ENCODE measurements at regions of chr15 and their contacts with region 1.

Region 1: GRCh38 chr15:48358229-48358641 is 27.0 kb downstream of the DUT start:
- DNase-seq: no peak
- ATAC-seq: peak in 1 of 4 donors; percentile 62
- H3K4me3 ChIP-seq: peak overlapping the region in 1 of 12 donors; percentile 3
- H3K27ac ChIP-seq: peak overlapping the region in 8 of 12 donors; percentile 3 to 53 (median 25)
- H3K4me1 ChIP-seq: peaks cover 0 to 20% (median 3%) of the 10 kb centered on the region in 12 donors
- H3K27me3 ChIP-seq: no peaks in the 10 kb centered on the region
- CTCF ChIP-seq: peak; percentile 38 to 75 (median 60)
- POLR2A ChIP-seq: no peak

Region 2: DNA sequence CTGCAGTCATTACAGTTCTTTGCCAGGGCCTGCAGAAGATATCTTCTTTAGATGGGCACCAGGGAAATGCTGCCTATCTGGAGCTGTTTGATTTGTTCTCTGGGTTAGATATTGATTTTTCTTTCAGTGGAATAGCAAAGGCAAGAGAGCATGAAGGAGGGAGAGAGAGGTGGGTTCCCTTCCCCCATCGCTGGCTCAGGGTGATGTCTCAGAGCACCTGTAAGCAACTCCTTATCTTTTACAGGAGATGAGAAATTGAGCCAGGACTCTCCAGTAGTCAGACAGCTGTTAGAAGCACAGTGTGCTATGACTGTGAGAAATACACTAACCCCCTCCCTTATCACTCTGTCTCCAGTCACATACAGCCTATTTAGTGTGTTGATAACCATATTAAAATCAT is 326.8 kb before region 1 on chr15:
- intact Hi-C with region 1: no loop called
- DNase-seq: no peak
- ATAC-seq: no peak
- H3K4me3 ChIP-seq: no peak overlapping the region
- H3K27ac ChIP-seq: no peak overlapping the region
- H3K4me1 ChIP-seq: no peaks in the 10 kb centered on the region
- H3K27me3 ChIP-seq: peaks cover 0 to 22% (median 0%) of the 10 kb centered on the region in 9 donors
- CTCF ChIP-seq: no peak
- POLR2A ChIP-seq: no peak

Region 3: DNA sequence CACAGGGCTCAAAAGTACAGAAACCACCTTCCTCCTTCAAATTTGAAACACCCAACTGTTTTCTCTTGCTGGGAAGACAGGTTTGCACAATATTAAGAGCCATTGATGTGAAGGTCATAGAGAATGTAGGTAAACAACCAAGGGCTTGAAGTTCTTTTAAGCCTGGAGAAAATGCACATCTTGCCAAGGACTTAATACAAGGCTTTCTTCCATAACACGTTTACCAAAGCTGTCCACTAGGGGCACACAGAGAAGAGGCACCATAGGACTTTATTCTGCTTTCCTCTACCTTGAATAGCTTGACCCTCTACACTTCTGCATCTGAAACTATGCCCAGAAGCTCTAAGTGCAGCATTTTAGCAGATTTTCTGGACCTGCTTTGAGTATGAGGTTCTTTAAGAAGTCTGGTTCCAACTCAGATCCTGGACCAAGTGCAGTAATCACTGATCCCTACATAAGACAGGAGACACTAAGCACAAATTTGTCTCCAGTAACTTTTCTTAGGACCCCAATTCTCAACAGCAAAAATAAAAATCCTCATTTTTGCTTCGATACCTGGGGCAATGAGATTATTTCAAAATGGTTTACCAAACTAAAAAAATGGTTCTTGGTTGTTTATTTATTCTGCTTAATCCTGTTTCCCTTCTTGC is 149.3 kb after region 1 on chr15:
- intact Hi-C with region 1: loop called in 1 of 10 experiments (anchors 10 kb)
- DNase-seq: no peak
- ATAC-seq: peak in 2 of 4 donors; percentile 39 to 55
- H3K4me3 ChIP-seq: no peak overlapping the region
- H3K27ac ChIP-seq: no peak overlapping the region
- H3K4me1 ChIP-seq: peaks cover 0 to 16% (median 0%) of the 10 kb centered on the region in 12 donors
- H3K27me3 ChIP-seq: no peaks in the 10 kb centered on the region
- CTCF ChIP-seq: peak; percentile 38 to 63 (median 50)
- POLR2A ChIP-seq: no peak

Region 4: GRCh38 chr15:48627260-48627960 is 269.2 kb after region 1 on chr15:
- intact Hi-C with region 1: loop called in 1 of 10 experiments (anchors 10 kb)
- DNase-seq: no peak
- ATAC-seq: peak in 3 of 4 donors; percentile 21 to 57 (median 35)
- H3K4me3 ChIP-seq: peak overlapping the region in 1 of 12 donors; percentile 1
- H3K27ac ChIP-seq: peak overlapping the region in 2 of 12 donors; percentile 9 to 28
- H3K4me1 ChIP-seq: peaks cover 0 to 77% (median 7%) of the 10 kb centered on the region in 12 donors
- H3K27me3 ChIP-seq: no peaks in the 10 kb centered on the region
- CTCF ChIP-seq: no peak
- POLR2A ChIP-seq: no peak

Region 5: DNA sequence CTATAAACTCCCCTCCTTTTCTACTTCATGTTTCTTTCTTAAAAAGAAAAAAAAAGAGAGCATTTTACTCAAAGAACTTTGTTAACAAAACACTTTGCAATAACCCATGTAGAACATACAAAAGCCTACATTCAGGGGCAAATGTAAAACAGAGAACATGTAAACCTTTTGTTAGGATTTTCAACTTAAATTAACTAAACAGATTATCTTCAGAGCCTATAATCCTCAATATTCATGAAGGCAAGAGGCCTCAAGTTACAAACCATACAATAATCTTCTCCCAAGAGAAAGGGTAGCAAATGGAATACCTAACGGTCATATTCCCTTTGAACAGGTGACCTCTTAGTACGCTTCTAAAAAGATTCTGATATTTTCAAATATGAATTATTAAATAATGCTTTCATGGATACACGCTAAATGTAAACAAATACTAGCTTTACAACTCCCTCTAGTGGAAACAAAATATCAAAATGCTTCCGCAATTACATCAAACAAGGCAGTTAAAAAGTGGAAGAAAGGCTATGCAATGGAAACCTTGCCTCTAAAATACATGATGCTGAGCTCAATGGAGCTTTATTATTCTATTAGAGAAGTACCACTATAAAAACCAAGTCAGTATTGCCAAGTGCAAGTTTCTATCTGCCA is 442.7 kb after region 1 on chr15:
- intact Hi-C with region 1: loop called (anchors 2 to 10 kb)
- DNase-seq: no peak
- ATAC-seq: no peak
- H3K4me3 ChIP-seq: peak overlapping the region in 1 of 12 donors; percentile 24
- H3K27ac ChIP-seq: peak overlapping the region in 2 of 12 donors; percentile 23 to 30
- H3K4me1 ChIP-seq: peaks cover 0 to 15% (median 1%) of the 10 kb centered on the region in 12 donors
- H3K27me3 ChIP-seq: no peaks in the 10 kb centered on the region
- CTCF ChIP-seq: peak; percentile 20 to 66 (median 51)
- POLR2A ChIP-seq: no peak

Measured in heart left ventricle (tissue), 16 donors.